ENCODE measurements at regions of chr6 and their contacts with region 1.

Region 1: GRCh38 chr6:112636650-112637262 is 289.6 kb downstream of the RFPL4B start:
- DNase-seq: peak; percentile 83
- ATAC-seq: peak; percentile 65; the same call in 1 of the 2 replicates
- H3K4me3 ChIP-seq: no peak overlapping the region
- H3K27ac ChIP-seq: no peak overlapping the region
- H3K4me1 ChIP-seq: peaks cover 2% of the 10 kb centered on the region; the same call in 1 of the 2 replicates
- H3K27me3 ChIP-seq: no peaks in the 10 kb centered on the region
- CTCF ChIP-seq: no peak
- POLR2A ChIP-seq: no peak
- RAD21 ChIP-seq: no peak

Region 2: GRCh38 chr6:112691289-112691688 is 54.5 kb after region 1 on chr6:
- CTCF ChIA-PET with region 1: no interaction called
- POLR2A ChIA-PET with region 1: no interaction called
- dilution Hi-C with region 1: no loop called
- in situ Hi-C with region 1: no loop called
- intact Hi-C with region 1: loop called (anchors 2 kb)
- DNase-seq: peak; percentile 91
- ATAC-seq: peak; percentile 64
- H3K4me3 ChIP-seq: no peak overlapping the region
- H3K27ac ChIP-seq: no peak overlapping the region
- H3K4me1 ChIP-seq: no peaks in the 10 kb centered on the region; the same call in 1 of the 2 replicates
- H3K27me3 ChIP-seq: no peaks in the 10 kb centered on the region
- CTCF ChIP-seq: no peak
- POLR2A ChIP-seq: no peak
- RAD21 ChIP-seq: no peak

Measured in IMR-90 (cell line).